ENCODE measurements at regions of chr7 and their contacts with region 1.

Region 1: GRCh38 chr7:128739048-128739962 is at the start of gene CALU:
- DNase-seq: peak; percentile 94 to 99 (median 98)

Region 2: GRCh38 chr7:128869138-128869943 is 130.0 kb after region 1 on chr7:
- intact Hi-C with region 1: loop called (anchors 5 kb)
- DNase-seq: peak in 40 of 42 donors; percentile 34 to 83 (median 60)

Measured in head of caudate nucleus (tissue), 42 donors.